ENCODE measurements at regions of chr14 and their contacts with region 1.

Region 1: DNA sequence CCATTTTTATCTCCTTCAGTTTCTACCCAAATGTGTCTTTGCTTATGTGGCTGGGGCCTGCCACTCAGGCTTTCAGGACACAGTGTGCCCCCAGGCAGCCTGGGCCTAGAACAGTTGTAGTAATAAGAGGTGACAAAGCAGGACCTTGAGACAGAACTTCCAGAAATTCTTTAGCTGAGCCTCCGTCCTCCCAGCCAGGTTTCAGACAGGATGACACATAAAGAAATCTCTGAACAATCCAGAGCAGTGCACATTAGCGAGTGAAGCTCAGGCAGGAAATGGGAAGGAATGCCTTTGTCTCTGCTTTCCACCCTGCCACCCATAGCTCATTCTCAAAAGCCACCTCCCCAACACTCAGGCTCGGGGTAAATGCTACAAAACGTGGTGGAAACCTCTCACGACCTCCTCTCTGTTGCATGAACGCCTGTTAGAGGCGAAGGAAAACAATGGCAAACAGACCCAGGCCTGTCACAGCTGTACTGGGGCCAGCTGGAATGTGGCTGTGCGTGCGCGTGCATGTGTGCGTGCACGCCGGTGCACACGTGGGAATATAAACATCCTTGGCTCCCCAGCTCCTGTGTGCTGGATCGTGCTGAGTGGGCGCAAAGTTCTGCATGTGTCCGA is 286.7 kb downstream of the ZFP36L1 start:
- DNase-seq: peak; percentile 71
- ATAC-seq: peak; percentile 72
- H3K4me3 ChIP-seq: no peak overlapping the region
- H3K27ac ChIP-seq: peak overlapping the region; percentile 68
- H3K4me1 ChIP-seq: peaks cover 20% of the 10 kb centered on the region
- H3K27me3 ChIP-seq: no peaks in the 10 kb centered on the region
- CTCF ChIP-seq: no peak

Region 2: GRCh38 chr14:68307014-68307789 is 198.9 kb before region 1 on chr14:
- CTCF ChIA-PET with region 1: no interaction called
- POLR2A ChIA-PET with region 1: no interaction called
- intact Hi-C with region 1: loop called (anchors 5 kb)
- DNase-seq: peak; percentile 84
- ATAC-seq: peak; percentile 83
- H3K4me3 ChIP-seq: peak overlapping the region; percentile 4; the same call in 1 of the 2 replicates
- H3K27ac ChIP-seq: peak overlapping the region; percentile 75
- H3K4me1 ChIP-seq: peaks cover 41% of the 10 kb centered on the region
- H3K27me3 ChIP-seq: no peaks in the 10 kb centered on the region
- CTCF ChIP-seq: no peak

Region 3: DNA sequence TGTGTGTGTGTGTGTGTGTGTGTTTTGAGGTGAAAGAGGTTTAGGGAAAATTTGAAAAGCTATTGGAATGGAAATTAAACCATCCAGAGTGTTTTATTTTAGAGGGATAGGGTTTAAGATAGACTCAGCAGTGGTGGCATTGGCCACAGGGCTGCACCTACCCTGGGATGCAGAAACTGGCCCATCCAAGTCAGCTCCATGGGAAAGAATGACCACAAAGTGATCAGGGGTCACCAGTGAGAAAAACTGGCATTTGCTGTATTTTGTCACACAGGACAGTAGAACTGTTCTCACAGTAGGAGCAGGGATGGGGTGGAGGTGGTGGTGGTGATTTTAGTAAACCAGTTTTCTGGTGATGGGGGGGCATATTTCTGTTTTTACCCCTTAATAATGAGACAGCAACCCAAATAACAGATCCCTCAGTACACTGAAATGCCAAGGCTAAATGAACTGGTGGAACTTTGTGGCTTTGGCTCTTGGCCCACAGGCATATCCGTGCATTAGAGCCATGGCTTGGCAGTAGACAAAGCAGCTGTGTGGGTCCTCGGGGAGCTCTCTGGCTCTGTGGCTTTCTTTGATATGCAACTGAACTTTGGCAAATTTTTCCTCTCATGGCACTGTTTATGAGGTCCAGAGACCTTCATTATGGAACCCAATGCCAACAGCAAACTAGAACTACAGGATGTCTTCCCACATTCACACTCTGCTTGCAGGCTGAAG is 61.5 kb before region 1 on chr14:
- CTCF ChIA-PET with region 1: no interaction called
- POLR2A ChIA-PET with region 1: no interaction called
- intact Hi-C with region 1: loop called (anchors 1 kb)
- DNase-seq: peak; percentile 64
- ATAC-seq: peak; percentile 44
- H3K4me3 ChIP-seq: no peak overlapping the region
- H3K27ac ChIP-seq: no peak overlapping the region
- H3K4me1 ChIP-seq: peaks cover 42% of the 10 kb centered on the region
- H3K27me3 ChIP-seq: no peaks in the 10 kb centered on the region
- CTCF ChIP-seq: no peak

Region 4: DNA sequence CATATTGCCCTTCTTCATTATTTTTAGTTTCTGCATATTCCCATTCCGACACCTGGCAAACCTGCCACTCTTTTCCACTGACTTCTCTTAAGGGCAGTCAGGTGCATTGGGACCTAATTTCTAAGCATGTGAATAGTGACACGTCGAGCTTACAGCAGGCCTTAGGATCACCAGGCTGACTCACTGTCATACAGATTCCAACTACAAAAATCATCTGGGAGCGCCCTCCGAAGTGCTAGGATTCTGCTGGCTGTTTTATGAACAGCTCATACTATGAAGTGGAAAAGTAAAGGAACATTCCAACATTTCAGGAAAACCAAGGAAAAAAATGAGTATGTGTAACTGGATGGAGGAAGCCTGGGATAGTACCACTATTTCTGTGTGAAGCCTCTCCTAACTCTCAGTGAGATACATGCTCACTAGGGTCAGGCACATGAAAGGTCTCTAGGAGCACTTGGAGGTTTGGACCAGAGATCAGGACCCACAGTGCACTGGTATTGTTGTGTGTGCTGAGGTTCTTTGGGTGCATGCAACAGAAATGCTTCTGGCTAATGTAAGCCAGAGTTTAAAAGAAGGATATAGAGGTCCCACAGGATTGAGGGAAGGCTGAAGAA is 29.4 kb after region 1 on chr14:
- CTCF ChIA-PET with region 1: no interaction called
- POLR2A ChIA-PET with region 1: interaction called, 8 read pairs
- intact Hi-C with region 1: loop called (anchors 1 kb)
- DNase-seq: peak; percentile 92
- ATAC-seq: peak; percentile 98
- H3K4me3 ChIP-seq: no peak overlapping the region
- H3K27ac ChIP-seq: peak overlapping the region; percentile 67
- H3K4me1 ChIP-seq: peaks cover 12% of the 10 kb centered on the region
- H3K27me3 ChIP-seq: no peaks in the 10 kb centered on the region
- CTCF ChIP-seq: 0 out of 2 replicates have a peak, but pooled peaks have one; percentile 15

Region 5: DNA sequence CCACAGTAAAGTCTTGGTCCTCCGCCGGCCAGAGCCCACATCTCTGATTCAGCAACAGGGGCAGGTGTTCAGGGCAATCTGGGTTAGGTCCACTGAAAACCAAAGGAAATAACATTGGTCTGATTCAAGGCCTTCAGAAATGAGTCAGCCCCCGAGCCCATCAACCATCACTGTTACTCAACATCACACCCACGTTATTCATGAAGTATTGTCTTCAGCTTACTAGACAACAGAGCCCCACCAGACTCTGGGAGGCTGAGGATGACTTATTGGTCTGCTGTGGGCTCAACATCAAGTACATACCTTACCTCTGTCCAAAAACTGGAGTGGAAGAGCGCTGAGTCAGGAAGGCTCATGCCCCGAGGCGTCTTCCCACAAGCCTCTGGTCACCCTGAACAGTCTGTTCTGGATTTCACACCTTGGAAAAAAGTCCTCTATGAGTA is 189.2 kb after region 1 on chr14:
- CTCF ChIA-PET with region 1: no interaction called
- POLR2A ChIA-PET with region 1: no interaction called
- intact Hi-C with region 1: loop called (anchors 5 kb)
- DNase-seq: peak; percentile 99
- ATAC-seq: peak; percentile 95
- H3K4me3 ChIP-seq: no peak overlapping the region
- H3K27ac ChIP-seq: peak overlapping the region; percentile 90
- H3K4me1 ChIP-seq: peaks cover 28% of the 10 kb centered on the region
- H3K27me3 ChIP-seq: no peaks in the 10 kb centered on the region
- CTCF ChIP-seq: no peak

Region 6: DNA sequence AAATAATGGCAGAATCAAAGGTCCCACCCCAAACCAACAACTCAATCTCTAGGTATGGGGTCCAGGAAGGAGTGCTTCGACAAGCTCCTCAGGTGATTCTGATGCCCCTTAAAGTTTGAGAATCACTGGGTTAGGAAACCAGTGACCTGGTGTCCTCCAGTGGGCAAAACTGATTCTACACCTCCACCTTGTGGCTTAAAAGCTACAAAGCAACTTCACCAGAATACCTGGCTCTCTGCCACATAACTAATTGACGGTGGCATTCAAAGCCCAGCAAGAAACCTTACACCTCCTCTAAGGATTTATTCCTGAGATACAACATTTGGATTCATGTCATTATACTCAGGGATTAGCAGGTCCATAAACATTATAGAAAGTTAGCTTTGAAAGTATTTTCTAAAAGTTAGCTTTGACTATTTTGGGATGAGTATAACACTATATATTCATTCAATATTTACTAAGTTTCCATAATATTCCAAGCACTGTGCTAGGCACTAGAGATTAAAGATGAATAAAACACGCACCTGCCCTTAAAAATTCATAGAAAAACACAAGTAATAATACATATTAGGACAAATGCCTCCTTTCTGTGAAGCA is 601.4 kb after region 1 on chr14:
- CTCF ChIA-PET with region 1: no interaction called
- POLR2A ChIA-PET with region 1: no interaction called
- intact Hi-C with region 1: no loop called
- DNase-seq: peak; percentile 85
- ATAC-seq: peak; percentile 67
- H3K4me3 ChIP-seq: no peak overlapping the region
- H3K27ac ChIP-seq: no peak overlapping the region
- H3K4me1 ChIP-seq: no peaks in the 10 kb centered on the region
- H3K27me3 ChIP-seq: no peaks in the 10 kb centered on the region
- CTCF ChIP-seq: peak; percentile 94

Measured in PC-3 (cell line).